Natural killer cell (primary cell): ENCODE measurements at regions of chr3 and their contacts with region 1.

Region 1: GRCh38 chr3:129120254-129121004 is 1.2 kb downstream of the RAB43 start:
- DNase-seq: peak; percentile 82 to 96
- ATAC-seq: peak; percentile 71 to 86 (median 75)
- H3K4me3 ChIP-seq: peak overlapping the region; percentile 92
- H3K4me3 Mint-ChIP-seq: peak overlapping the region; percentile 87
- H3K27ac ChIP-seq: peak overlapping the region; percentile 88
- H3K27ac Mint-ChIP-seq: peak overlapping the region; percentile 74 to 87
- H3K4me1 ChIP-seq: peaks cover 57% of the 10 kb centered on the region
- H3K4me1 Mint-ChIP-seq: peaks cover 58 to 62% of the 10 kb centered on the region in 2 donors
- H3K27me3 ChIP-seq: no peaks in the 10 kb centered on the region
- H3K27me3 Mint-ChIP-seq: no peaks in the 10 kb centered on the region
- CTCF ChIP-seq: no peak

Region 2: DNA sequence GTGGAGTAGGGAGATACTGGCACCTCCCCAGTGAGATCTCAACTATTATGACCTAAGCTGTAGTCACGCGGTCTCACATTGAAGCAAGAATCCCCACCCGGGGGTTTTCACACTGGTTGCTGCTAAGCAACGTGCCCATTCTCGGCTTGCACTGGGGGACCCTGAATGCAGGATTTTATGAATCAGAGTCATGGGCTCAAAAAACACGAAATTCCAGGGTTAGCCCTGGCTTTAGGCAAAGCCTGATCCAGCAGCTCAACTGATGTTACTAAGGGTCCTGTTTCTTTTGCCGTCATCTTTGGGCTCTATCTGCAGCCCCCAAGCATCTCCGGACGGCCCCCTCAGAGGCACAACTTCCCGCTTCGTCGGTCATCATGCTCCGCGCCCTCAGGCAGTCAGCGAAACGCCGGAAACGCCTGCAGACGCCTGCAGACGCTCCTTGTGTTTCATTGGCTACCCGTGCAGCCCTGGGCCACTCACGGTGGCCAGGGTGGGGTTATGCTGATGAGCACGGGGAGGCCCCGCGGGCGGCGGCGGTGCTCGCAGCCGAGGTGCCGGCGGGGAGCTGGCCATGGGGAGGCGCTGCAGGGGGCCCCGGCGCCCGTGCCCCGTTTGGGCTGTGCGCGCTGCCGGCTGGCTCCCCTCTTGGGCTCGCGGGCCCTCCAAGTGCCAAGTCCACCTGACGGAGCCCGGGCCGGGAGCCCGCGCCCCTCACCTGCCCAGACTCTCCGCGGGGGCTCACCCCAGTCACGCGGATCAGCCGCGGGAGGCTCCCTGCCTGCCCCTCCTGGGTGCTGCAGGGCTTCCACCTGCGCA is 93.5 kb before region 1 on chr3:
- intact Hi-C with region 1: loop called (anchors 1 kb)
- DNase-seq: peak; percentile 90 to 96
- ATAC-seq: peak; percentile 93 to 99 (median 95)
- H3K4me3 ChIP-seq: peak overlapping the region; percentile 52
- H3K4me3 Mint-ChIP-seq: peak overlapping the region; percentile 87
- H3K27ac ChIP-seq: peak overlapping the region; percentile 74
- H3K27ac Mint-ChIP-seq: peak overlapping the region; percentile 99 to 100
- H3K4me1 ChIP-seq: peaks cover 32% of the 10 kb centered on the region
- H3K4me1 Mint-ChIP-seq: peaks cover 25 to 35% of the 10 kb centered on the region in 2 donors
- H3K27me3 ChIP-seq: no peaks in the 10 kb centered on the region
- H3K27me3 Mint-ChIP-seq: no peaks in the 10 kb centered on the region
- CTCF ChIP-seq: peak; percentile 88

Region 3: DNA sequence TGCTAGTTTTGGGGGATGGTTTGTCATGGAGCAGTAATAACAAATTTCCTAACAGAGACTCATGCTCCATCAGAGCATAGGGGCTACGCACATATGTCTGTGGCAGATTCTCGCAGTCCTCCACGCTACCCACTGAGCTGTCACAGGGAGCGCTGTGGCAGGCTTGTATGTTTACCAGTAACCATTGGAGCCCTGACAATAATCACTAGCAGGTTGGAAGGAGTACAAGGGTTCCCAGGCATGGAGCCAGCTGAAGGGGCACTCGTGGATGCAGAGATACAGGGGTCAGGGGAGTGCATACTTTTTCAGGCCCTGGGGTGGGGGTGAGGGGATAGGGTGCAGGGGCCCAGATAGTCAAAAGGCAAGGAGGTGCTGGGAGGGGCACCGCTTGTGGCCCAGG is 67.8 kb before region 1 on chr3:
- intact Hi-C with region 1: loop called (anchors 2 kb)
- DNase-seq: no peak
- ATAC-seq: no peak
- H3K4me3 ChIP-seq: no peak overlapping the region
- H3K4me3 Mint-ChIP-seq: no peak overlapping the region
- H3K27ac ChIP-seq: no peak overlapping the region
- H3K27ac Mint-ChIP-seq: no peak overlapping the region
- H3K4me1 ChIP-seq: peaks cover 9% of the 10 kb centered on the region
- H3K4me1 Mint-ChIP-seq: peaks cover 8 to 9% of the 10 kb centered on the region in 2 donors
- H3K27me3 ChIP-seq: no peaks in the 10 kb centered on the region
- H3K27me3 Mint-ChIP-seq: no peaks in the 10 kb centered on the region
- CTCF ChIP-seq: no peak

Region 4: GRCh38 chr3:129068291-129068886 is 52.0 kb before region 1 on chr3:
- intact Hi-C with region 1: loop called (anchors 1 kb)
- DNase-seq: no peak
- ATAC-seq: peak; percentile 33 to 48 (median 46)
- H3K4me3 ChIP-seq: peak overlapping the region; percentile 23
- H3K4me3 Mint-ChIP-seq: peak overlapping the region; percentile 55
- H3K27ac ChIP-seq: peak overlapping the region; percentile 63
- H3K27ac Mint-ChIP-seq: peak overlapping the region; percentile 91 to 94
- H3K4me1 ChIP-seq: peaks cover 46% of the 10 kb centered on the region
- H3K4me1 Mint-ChIP-seq: peaks cover 28 to 39% of the 10 kb centered on the region in 2 donors
- H3K27me3 ChIP-seq: no peaks in the 10 kb centered on the region
- H3K27me3 Mint-ChIP-seq: no peaks in the 10 kb centered on the region
- CTCF ChIP-seq: no peak

Region 5: GRCh38 chr3:129160891-129161859 is 40.7 kb after region 1 on chr3 and contains the start of gene ISY1:
- intact Hi-C with region 1: loop called (anchors 1 kb)
- DNase-seq: peak; percentile 79 to 97
- ATAC-seq: peak; percentile 78 to 90 (median 86)
- H3K4me3 ChIP-seq: peak within 1 kb of the TSS; percentile 65
- H3K4me3 Mint-ChIP-seq: peak within 1 kb of the TSS; percentile 98
- H3K27ac ChIP-seq: peak within 1 kb of the TSS; percentile 87
- H3K27ac Mint-ChIP-seq: peak within 1 kb of the TSS; percentile 96 to 99
- H3K4me1 ChIP-seq: peaks cover 15% of the 10 kb centered on the region
- H3K4me1 Mint-ChIP-seq: peaks cover 37 to 39% of the 10 kb centered on the region in 2 donors
- H3K27me3 ChIP-seq: no peaks in the 10 kb centered on the region
- H3K27me3 Mint-ChIP-seq: no peaks in the 10 kb centered on the region
- CTCF ChIP-seq: peak; percentile 62
- total RNA-seq, gene ISY1: 51.9 to 58.2 (median 56.1) TPM

Region 6: GRCh38 chr3:129183569-129184395 is 63.4 kb after region 1 on chr3 and contains the start of gene CNBP:
- intact Hi-C with region 1: loop called (anchors 2 kb)
- DNase-seq: peak; percentile 95 to 96
- ATAC-seq: peak; percentile 95 to 100 (median 97)
- H3K4me3 ChIP-seq: peak within 1 kb of the TSS; percentile 95
- H3K4me3 Mint-ChIP-seq: peak within 1 kb of the TSS; percentile 91
- H3K27ac ChIP-seq: peak within 1 kb of the TSS; percentile 93
- H3K27ac Mint-ChIP-seq: peak within 1 kb of the TSS; percentile 84 to 100
- H3K4me1 ChIP-seq: peaks cover 42% of the 10 kb centered on the region
- H3K4me1 Mint-ChIP-seq: peaks cover 39 to 47% of the 10 kb centered on the region in 2 donors
- H3K27me3 ChIP-seq: no peaks in the 10 kb centered on the region
- H3K27me3 Mint-ChIP-seq: no peaks in the 10 kb centered on the region
- CTCF ChIP-seq: no peak
- total RNA-seq, gene CNBP: 202 to 223 (median 211) TPM

Region 7: DNA sequence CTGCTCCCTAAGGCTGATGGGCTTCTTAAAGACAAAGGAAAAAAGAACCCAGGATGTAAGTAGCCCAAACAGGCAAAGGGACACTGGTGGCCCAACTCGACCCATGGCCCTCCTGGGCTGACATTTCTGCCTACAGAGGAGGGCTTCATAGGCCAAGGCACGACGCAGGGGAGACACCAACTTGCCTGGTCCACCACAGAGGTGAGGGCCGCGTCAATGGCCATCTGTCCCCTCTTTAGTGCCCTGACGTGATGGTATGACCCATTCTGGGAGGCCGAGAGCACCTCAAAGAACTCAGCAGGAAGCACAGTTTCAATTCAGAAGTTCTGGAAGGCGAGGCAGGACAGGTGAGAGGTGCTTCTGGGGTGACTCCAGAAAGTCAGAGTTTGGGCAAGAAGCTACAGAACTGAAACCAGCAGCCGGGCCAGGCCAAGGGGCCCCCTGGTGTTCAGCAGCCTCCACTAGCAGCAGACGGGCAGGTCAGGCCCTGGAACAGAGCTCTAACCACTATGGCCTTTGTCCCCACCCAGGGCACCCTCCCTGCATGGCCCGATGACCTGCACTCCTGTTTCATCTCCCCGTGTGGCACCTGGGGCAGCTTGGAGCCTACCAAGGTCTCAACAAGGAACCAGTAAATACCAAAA is 203.3 kb after region 1 on chr3:
- intact Hi-C with region 1: no loop called
- DNase-seq: peak in 1 of 2 donors; percentile 23
- ATAC-seq: no peak
- H3K4me3 ChIP-seq: no peak overlapping the region
- H3K4me3 Mint-ChIP-seq: no peak overlapping the region
- H3K27ac ChIP-seq: no peak overlapping the region
- H3K27ac Mint-ChIP-seq: no peak overlapping the region
- H3K4me1 ChIP-seq: no peaks in the 10 kb centered on the region
- H3K4me1 Mint-ChIP-seq: peaks cover 0 to 1% of the 10 kb centered on the region in 2 donors
- H3K27me3 ChIP-seq: no peaks in the 10 kb centered on the region
- H3K27me3 Mint-ChIP-seq: no peaks in the 10 kb centered on the region
- CTCF ChIP-seq: no peak